Activated T-helper 2 cell treated with anti-CD3 and anti-CD28 coated beads, Interferon-gamma antibody, Interleukin-2, Interleukin-4, amounts not matched to agents 10 μg/mL and 5 μg/mL and 100 μg/mL, durations not matched to agents 14 hours and 24 hours and 36 hours (primary cell): ENCODE measurements at regions of chr16 and their contacts with region 1.

Region 1: DNA sequence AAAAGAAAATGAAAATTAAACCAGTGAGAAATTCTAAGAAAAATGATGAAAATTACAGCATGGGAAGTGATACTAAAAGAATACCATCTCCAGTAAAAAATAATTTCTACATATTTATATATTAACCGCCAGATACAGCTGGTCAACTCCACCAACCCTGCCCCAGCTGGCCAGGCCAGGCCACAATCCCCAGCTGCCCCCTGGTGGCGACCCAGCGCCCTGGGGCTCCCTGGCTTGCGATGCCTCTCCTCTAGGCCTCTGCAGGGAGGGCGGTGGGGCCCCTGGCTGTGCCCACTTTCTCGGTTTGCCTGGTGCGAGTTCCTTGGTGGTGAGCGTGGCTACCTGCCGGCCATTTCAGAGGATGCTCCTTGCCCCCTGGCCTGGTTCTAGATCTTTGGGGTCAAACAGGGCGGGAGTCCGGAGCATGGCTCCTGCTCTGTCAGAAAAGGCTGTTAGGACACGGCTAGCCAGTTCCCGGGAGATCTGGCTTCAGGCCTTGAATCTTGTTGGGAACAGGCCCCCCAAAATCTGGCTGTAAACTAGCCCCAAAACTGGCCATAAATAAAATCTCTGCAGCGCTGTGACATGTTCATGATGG is 14.5 kb downstream of the GLIS2 start:
- DNase-seq: peak; percentile 47
- H3K4me3 Mint-ChIP-seq: no peak overlapping the region
- H3K27ac Mint-ChIP-seq: no peak overlapping the region
- H3K4me1 Mint-ChIP-seq: peaks cover 3% of the 10 kb centered on the region
- H3K27me3 Mint-ChIP-seq: peaks cover 5% of the 10 kb centered on the region

Region 2: GRCh38 chr16:3611146-3611975 is 719.0 kb before region 1 on chr16 and contains the start of gene SLX4:
- intact Hi-C with region 1: no loop called
- DNase-seq: peak; percentile 93
- H3K4me3 Mint-ChIP-seq: peak within 1 kb of the TSS; percentile 100
- H3K27ac Mint-ChIP-seq: peak within 1 kb of the TSS; percentile 96
- H3K4me1 Mint-ChIP-seq: peaks cover 43% of the 10 kb centered on the region
- H3K27me3 Mint-ChIP-seq: no peaks in the 10 kb centered on the region
- total RNA-seq, gene SLX4: 11.8 and 12.2 TPM in 2 replicates

Region 3: GRCh38 chr16:4288148-4288921 is 42.0 kb before region 1 on chr16:
- intact Hi-C with region 1: loop called (anchors 1 kb)
- DNase-seq: peak; percentile 69
- H3K4me3 Mint-ChIP-seq: no peak overlapping the region
- H3K27ac Mint-ChIP-seq: no peak overlapping the region
- H3K4me1 Mint-ChIP-seq: peaks cover 4% of the 10 kb centered on the region
- H3K27me3 Mint-ChIP-seq: no peaks in the 10 kb centered on the region

Region 4: DNA sequence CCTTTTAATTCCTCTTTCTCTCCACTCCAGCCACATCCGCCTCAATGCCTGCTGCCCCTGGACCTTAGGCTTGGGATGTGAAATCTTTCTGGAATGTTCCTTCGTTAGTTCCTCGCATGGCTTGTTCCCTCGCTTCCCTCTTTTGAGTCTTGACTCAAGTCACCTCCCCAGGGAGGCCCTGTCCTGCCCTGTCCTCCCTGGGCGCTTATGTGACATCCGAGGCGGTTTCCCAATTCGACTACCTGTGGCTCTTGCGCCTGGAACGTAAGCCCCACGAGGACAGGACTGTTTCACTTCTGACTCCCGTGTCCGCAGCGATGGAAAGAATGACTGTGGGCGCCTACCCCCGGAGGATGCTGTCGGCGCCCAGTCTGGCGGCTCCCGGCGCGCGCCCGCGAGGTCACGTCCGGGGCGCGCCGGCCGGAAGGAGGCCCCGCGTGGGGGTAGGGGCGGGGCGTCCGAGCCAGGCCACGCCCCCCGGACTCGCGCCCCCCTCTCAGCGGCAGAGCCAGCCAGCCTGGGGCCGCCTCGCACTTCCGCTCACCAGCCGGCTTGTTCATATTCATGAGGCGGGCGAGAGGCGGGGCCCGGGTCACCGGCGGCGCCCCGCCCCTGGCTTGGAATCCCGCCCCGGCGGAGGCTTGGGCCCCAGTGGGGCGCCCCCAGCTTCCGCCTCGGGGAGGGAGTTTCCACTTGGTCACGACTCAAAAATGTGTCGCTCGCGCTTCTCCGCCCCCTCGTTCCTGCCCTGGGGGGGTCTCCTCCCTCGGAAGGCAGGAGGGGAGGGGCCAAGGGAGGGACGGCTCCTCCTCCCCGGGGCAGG is 22.9 kb before region 1 on chr16:
- intact Hi-C with region 1: loop called (anchors 1 kb)
- DNase-seq: peak; percentile 96
- H3K4me3 Mint-ChIP-seq: peak overlapping the region; percentile 99
- H3K27ac Mint-ChIP-seq: peak overlapping the region; percentile 97
- H3K4me1 Mint-ChIP-seq: peaks cover 18% of the 10 kb centered on the region
- H3K27me3 Mint-ChIP-seq: no peaks in the 10 kb centered on the region

Region 5: GRCh38 chr16:4315186-4316109 is 14.9 kb before region 1 on chr16 and contains the start of gene GLIS2:
- intact Hi-C with region 1: loop called (anchors 2 kb)
- DNase-seq: no peak
- H3K4me3 Mint-ChIP-seq: peak within 1 kb of the TSS; percentile 93
- H3K27ac Mint-ChIP-seq: no peak within 1 kb of the TSS
- H3K4me1 Mint-ChIP-seq: peaks cover 6% of the 10 kb centered on the region
- H3K27me3 Mint-ChIP-seq: peaks cover 18% of the 10 kb centered on the region
- total RNA-seq, gene GLIS2: 2.1 and 2.5 TPM in 2 replicates

Region 6: GRCh38 chr16:5309946-5310611 is 979.7 kb after region 1 on chr16:
- intact Hi-C with region 1: no loop called
- DNase-seq: no peak
- H3K4me3 Mint-ChIP-seq: no peak overlapping the region
- H3K27ac Mint-ChIP-seq: no peak overlapping the region
- H3K4me1 Mint-ChIP-seq: no peaks in the 10 kb centered on the region
- H3K27me3 Mint-ChIP-seq: no peaks in the 10 kb centered on the region